GM12878 (cell line): ENCODE measurements at regions of chr2 and their contacts with region 1.

Region 1: DNA sequence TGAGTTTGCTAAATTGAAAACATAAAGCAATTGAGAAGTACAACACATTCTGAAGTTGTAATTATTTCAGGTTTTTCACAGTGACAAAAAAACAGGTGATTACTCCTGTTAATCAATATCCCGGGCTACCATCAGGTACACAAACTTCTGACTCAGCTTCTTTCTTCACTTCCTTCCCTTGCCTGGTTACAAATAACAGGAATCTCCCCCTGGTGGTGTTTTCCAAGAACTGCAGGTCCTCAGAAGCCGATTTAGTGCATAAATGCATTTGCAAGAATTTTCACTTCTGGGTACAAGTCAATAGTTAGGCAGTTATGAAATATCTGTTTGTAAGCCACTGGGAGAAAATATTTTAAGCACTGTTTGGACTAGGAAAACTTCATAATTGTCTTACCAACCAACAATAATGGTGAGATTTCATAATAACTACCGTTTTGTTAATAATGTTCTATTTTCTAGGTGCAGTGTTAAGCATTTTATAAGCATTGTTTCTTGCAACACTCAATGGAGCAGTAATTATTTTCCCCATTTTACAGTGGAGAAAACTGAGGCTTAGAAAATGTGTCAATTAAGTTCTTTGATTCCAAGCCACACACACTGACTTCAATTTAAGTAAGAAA is 12.4 kb upstream of the GMCL1 start:
- DNase-seq: peak; percentile 66
- ATAC-seq: peak; percentile 89
- H3K4me3 ChIP-seq: no peak overlapping the region
- H3K27ac ChIP-seq: no peak overlapping the region; the same call in 1 of the 2 replicates
- H3K4me1 ChIP-seq: no peaks in the 10 kb centered on the region
- H3K27me3 ChIP-seq: no peaks in the 10 kb centered on the region
- CTCF ChIP-seq: peak; percentile 71 to 82 (median 80)
- EP300 ChIP-seq: no peak
- POLR2A ChIP-seq: no peak
- RAD21 ChIP-seq: peak; percentile 92

Region 2: GRCh38 chr2:69734035-69734631 is 82.9 kb before region 1 on chr2:
- CTCF ChIA-PET with region 1: interaction called, 37 read pairs
- POLR2A ChIA-PET with region 1: interaction called, 4 read pairs
- RAD21 ChIA-PET with region 1: interaction called, 55 read pairs
- SMC1A ChIA-PET with region 1: interaction called, 26 read pairs
- in situ Hi-C with region 1: no loop called
- intact Hi-C with region 1: no loop called
- DNase-seq: no peak
- ATAC-seq: no peak
- H3K4me3 ChIP-seq: no peak overlapping the region
- H3K27ac ChIP-seq: no peak overlapping the region
- H3K4me1 ChIP-seq: peaks cover 20% of the 10 kb centered on the region
- H3K27me3 ChIP-seq: no peaks in the 10 kb centered on the region
- CTCF ChIP-seq: no peak
- EP300 ChIP-seq: no peak
- POLR2A ChIP-seq: no peak
- RAD21 ChIP-seq: no peak

Region 3: GRCh38 chr2:69762513-69763497 is 54.2 kb before region 1 on chr2:
- CTCF ChIA-PET with region 1: interaction called, 23 read pairs
- POLR2A ChIA-PET with region 1: interaction called, 4 read pairs
- RAD21 ChIA-PET with region 1: interaction called, 11 read pairs
- SMC1A ChIA-PET with region 1: interaction called, 30 read pairs
- in situ Hi-C with region 1: no loop called
- intact Hi-C with region 1: loop called (anchors 2 kb)
- DNase-seq: no peak
- ATAC-seq: peak; percentile 46
- H3K4me3 ChIP-seq: no peak overlapping the region
- H3K27ac ChIP-seq: peak overlapping the region; percentile 9; the same call in 1 of the 2 replicates
- H3K4me1 ChIP-seq: peaks cover 44% of the 10 kb centered on the region
- H3K27me3 ChIP-seq: no peaks in the 10 kb centered on the region
- CTCF ChIP-seq: no peak
- EP300 ChIP-seq: no peak
- POLR2A ChIP-seq: no peak
- RAD21 ChIP-seq: no peak

Region 4: GRCh38 chr2:69789175-69789721 is 27.8 kb before region 1 on chr2:
- CTCF ChIA-PET with region 1: interaction called, 31 read pairs
- POLR2A ChIA-PET with region 1: interaction called, 3 read pairs
- RAD21 ChIA-PET with region 1: interaction called, 29 read pairs
- SMC1A ChIA-PET with region 1: interaction called, 36 read pairs
- in situ Hi-C with region 1: no loop called
- intact Hi-C with region 1: no loop called
- DNase-seq: no peak
- ATAC-seq: peak; percentile 92
- H3K4me3 ChIP-seq: peak overlapping the region; percentile 54
- H3K27ac ChIP-seq: peak overlapping the region; percentile 92
- H3K4me1 ChIP-seq: peaks cover 32% of the 10 kb centered on the region
- H3K27me3 ChIP-seq: no peaks in the 10 kb centered on the region
- CTCF ChIP-seq: no peak
- EP300 ChIP-seq: peak in 1 of 2 experiments; percentile 42; a peak in 1 of 4 replicates
- POLR2A ChIP-seq: peak; percentile 61; the same call in 1 of the 2 replicates
- RAD21 ChIP-seq: no peak

Region 5: GRCh38 chr2:69829256-69830046 is 12.4 kb after region 1 on chr2 and contains the start of gene GMCL1:
- CTCF ChIA-PET with region 1: interaction called, 46 read pairs
- POLR2A ChIA-PET with region 1: interaction called, 6 read pairs
- RAD21 ChIA-PET with region 1: interaction called, 9 read pairs
- SMC1A ChIA-PET with region 1: interaction called, 26 read pairs
- in situ Hi-C with region 1: no loop called
- intact Hi-C with region 1: no loop called
- DNase-seq: peak; percentile 92
- ATAC-seq: peak; percentile 94
- H3K4me3 ChIP-seq: peak within 1 kb of the TSS; percentile 87
- H3K27ac ChIP-seq: peak within 1 kb of the TSS; percentile 93
- H3K4me1 ChIP-seq: peaks cover 3% of the 10 kb centered on the region
- H3K27me3 ChIP-seq: no peaks in the 10 kb centered on the region
- CTCF ChIP-seq: no peak
- EP300 ChIP-seq: no peak
- POLR2A ChIP-seq: peak; percentile 93
- RAD21 ChIP-seq: no peak
- polyA plus RNA-seq, gene GMCL1: 3.7 to 4.8 TPM